ENCODE measurements at regions of chr5 and their contacts with region 1.

Region 1: GRCh38 chr5:115841382-115842088 is at the starts of genes AP3S1 and ATG12:
- DNase-seq: peak; percentile 93
- H3K4me3 Mint-ChIP-seq: peak within 1 kb of the TSS; percentile 96
- H3K27ac Mint-ChIP-seq: peak within 1 kb of the TSS; percentile 99
- H3K4me1 Mint-ChIP-seq: peaks cover 45% of the 10 kb centered on the region
- H3K27me3 Mint-ChIP-seq: no peaks in the 10 kb centered on the region
- total RNA-seq, gene AP3S1: 56.6 to 57.8 TPM
- total RNA-seq, gene ATG12: 39.1 to 41.3 TPM

Region 2: DNA sequence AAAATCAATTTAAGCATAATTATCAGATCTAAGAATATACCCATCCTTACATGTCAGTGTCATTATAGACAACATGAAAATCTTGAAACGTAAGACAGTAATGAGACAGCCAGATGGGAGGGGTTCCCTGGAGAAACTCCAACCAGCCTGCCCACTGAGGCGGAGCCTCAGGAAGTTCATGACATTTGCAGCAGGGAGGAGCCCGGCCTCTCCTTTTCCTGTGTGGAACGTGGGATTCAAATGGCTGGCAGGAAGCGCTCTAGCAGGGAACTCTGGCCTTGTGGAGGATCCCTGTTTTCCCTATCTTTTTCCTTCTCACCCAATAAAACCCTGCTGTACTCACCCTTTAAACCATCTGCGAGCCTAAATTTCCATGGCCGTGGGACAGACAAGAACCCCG is 1656.3 kb before region 1 on chr5:
- CTCF ChIA-PET with region 1: no interaction called
- intact Hi-C with region 1: no loop called
- DNase-seq: no peak
- H3K4me3 Mint-ChIP-seq: no peak overlapping the region
- H3K27ac Mint-ChIP-seq: no peak overlapping the region
- H3K4me1 Mint-ChIP-seq: no peaks in the 10 kb centered on the region
- H3K27me3 Mint-ChIP-seq: no peaks in the 10 kb centered on the region

Region 3: GRCh38 chr5:115296124-115297022 is 545.2 kb before region 1 on chr5 and contains the start of gene CCDC112:
- CTCF ChIA-PET with region 1: no interaction called
- intact Hi-C with region 1: loop called (anchors 1 kb)
- DNase-seq: peak; percentile 85
- H3K4me3 Mint-ChIP-seq: peak within 1 kb of the TSS; percentile 80
- H3K27ac Mint-ChIP-seq: no peak within 1 kb of the TSS
- H3K4me1 Mint-ChIP-seq: peaks cover 4% of the 10 kb centered on the region
- H3K27me3 Mint-ChIP-seq: peaks cover 3% of the 10 kb centered on the region
- total RNA-seq, gene CCDC112: 1.9 to 2.1 TPM

Region 4: DNA sequence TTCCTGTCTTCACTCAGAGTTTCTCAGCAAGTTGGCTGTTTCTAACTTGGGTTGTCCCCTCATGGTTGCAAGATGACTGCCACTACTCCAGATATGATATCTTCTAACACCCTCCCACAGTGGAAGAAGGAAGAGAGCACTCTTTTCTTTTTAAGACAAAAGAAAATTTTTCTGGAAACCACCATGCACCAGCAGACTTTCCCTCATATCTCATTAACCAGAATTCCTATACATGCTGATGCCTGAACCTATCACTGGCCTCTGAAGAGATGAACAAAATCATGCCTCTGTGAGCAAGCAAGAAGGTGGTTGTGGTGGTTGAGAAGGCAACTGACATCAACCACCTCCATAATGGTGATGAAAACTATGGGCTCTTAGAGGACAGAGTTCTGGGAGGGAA is 353.8 kb before region 1 on chr5:
- CTCF ChIA-PET with region 1: no interaction called
- intact Hi-C with region 1: loop called (anchors 10 kb)
- DNase-seq: peak; percentile 53
- H3K4me3 Mint-ChIP-seq: no peak overlapping the region
- H3K27ac Mint-ChIP-seq: peak overlapping the region; percentile 64
- H3K4me1 Mint-ChIP-seq: peaks cover 44% of the 10 kb centered on the region
- H3K27me3 Mint-ChIP-seq: peaks cover 8% of the 10 kb centered on the region

Region 5: DNA sequence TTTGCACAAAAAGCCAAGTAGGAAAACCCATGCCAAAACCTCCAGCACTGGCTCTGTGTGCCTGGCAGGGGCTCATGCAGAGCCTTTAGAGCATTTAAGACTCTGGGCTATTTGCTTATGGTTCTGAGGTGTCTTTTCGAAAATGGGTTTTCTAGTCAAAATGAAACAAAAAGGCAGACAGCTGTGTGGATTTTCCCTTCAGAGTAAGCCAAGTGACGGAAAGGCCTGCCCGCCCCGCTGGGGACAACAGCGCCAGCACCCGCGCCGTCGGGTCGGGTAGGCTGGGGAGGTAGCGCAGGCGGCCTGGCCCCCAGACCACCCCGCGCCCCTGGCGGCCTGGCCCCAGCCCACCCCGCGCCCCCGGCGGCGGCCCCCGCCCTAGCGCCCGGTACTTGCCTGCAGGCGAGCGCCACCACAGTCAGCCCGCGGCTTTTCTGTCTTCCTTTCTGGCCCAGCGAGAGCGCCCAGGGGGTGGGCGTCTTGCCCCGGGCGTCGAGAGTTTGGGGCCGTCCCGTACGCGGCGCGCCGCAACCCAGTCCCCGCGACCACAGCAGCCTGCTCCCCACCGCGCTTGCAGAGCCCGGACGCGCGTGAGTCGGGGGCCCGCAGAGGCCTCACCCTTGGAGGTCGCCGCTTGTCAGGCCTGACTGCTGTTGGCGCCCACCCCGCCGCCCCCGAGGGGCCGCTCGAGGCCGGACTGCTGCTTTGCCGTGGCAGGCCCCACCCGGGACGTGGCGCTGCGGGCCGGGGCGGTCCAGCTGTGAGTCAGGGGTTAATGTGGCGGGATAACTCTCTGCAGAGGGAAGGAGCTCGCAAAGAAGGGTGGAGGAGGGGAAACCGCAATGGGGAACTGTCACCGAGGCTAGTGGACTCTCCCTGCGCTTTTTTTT is 239.6 kb before region 1 on chr5 and contains the start of gene TICAM2:
- CTCF ChIA-PET with region 1: interaction called, 3 read pairs
- intact Hi-C with region 1: loop called (anchors 1 kb)
- DNase-seq: peak; percentile 76
- H3K4me3 Mint-ChIP-seq: peak within 1 kb of the TSS; percentile 59
- H3K27ac Mint-ChIP-seq: no peak within 1 kb of the TSS
- H3K4me1 Mint-ChIP-seq: peaks cover 39% of the 10 kb centered on the region
- H3K27me3 Mint-ChIP-seq: no peaks in the 10 kb centered on the region
- total RNA-seq, gene TICAM2: 0.72 to 0.91 TPM

Region 6: DNA sequence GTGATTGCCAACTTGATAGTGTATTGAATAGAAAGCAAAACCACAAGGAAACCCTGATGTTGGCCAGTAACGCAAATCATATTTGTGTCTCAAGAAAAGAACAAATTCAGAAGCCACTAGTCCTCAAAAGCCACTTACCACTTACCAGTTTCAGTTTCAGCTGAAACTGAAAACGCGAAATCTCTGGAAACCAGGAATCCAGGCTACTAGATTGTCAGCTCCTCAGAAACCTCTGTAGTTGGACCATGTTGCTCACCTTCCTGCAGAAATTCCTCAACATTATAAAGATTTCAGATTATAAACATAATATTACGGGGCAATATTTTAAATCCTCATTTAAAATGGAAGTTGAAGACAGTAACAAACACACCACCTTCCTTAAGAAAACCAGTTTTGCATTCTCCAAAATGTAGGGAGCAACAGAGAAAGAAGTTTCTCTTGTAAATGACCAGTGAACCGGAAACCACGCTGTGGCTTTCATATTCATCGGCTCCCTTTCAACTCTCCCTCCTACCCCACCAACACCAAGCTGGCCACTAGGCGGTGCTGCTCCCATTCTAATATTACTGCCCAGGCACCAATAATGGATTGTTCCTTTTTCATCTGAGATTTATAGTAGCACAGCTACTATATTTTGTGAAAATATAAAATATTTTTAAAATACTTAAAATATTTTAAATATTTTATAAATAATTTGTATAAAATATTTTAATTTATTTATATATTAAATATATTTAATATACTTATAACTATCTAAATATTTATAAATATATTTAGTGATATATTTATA is 207.0 kb before region 1 on chr5:
- CTCF ChIA-PET with region 1: interaction called, 20 read pairs
- intact Hi-C with region 1: loop called (anchors 1 kb)
- DNase-seq: peak; percentile 94
- H3K4me3 Mint-ChIP-seq: no peak overlapping the region
- H3K27ac Mint-ChIP-seq: no peak overlapping the region
- H3K4me1 Mint-ChIP-seq: peaks cover 38% of the 10 kb centered on the region
- H3K27me3 Mint-ChIP-seq: peaks cover 12% of the 10 kb centered on the region

Region 7: GRCh38 chr5:116068028-116068632 is 226.6 kb after region 1 on chr5:
- CTCF ChIA-PET with region 1: no interaction called
- intact Hi-C with region 1: loop called (anchors 1 kb)
- DNase-seq: peak; percentile 55
- H3K4me3 Mint-ChIP-seq: no peak overlapping the region
- H3K27ac Mint-ChIP-seq: no peak overlapping the region
- H3K4me1 Mint-ChIP-seq: no peaks in the 10 kb centered on the region
- H3K27me3 Mint-ChIP-seq: peaks cover 22% of the 10 kb centered on the region

Region 8: GRCh38 chr5:116084871-116085715 is 243.6 kb after region 1 on chr5 and contains the start of gene COMMD10:
- CTCF ChIA-PET with region 1: no interaction called
- intact Hi-C with region 1: loop called (anchors 1 kb)
- DNase-seq: peak; percentile 81
- H3K4me3 Mint-ChIP-seq: peak within 1 kb of the TSS; percentile 91
- H3K27ac Mint-ChIP-seq: peak within 1 kb of the TSS; percentile 97
- H3K4me1 Mint-ChIP-seq: peaks cover 45% of the 10 kb centered on the region
- H3K27me3 Mint-ChIP-seq: no peaks in the 10 kb centered on the region
- total RNA-seq, gene COMMD10: 30.0 to 30.9 TPM